Vagina (tissue), 2 donors: ENCODE measurements at regions of chr11 and their contacts with region 1.

Region 1: GRCh38 chr11:33598426-33599069 is 102.1 kb downstream of the C11orf91 start:
- DNase-seq: no peak
- H3K4me3 ChIP-seq: no peak overlapping the region
- H3K27ac ChIP-seq: no peak overlapping the region
- H3K4me1 ChIP-seq: no peaks in the 10 kb centered on the region
- H3K27me3 ChIP-seq: no peaks in the 10 kb centered on the region
- CTCF ChIP-seq: no peak
- POLR2A ChIP-seq: no peak

Region 2: DNA sequence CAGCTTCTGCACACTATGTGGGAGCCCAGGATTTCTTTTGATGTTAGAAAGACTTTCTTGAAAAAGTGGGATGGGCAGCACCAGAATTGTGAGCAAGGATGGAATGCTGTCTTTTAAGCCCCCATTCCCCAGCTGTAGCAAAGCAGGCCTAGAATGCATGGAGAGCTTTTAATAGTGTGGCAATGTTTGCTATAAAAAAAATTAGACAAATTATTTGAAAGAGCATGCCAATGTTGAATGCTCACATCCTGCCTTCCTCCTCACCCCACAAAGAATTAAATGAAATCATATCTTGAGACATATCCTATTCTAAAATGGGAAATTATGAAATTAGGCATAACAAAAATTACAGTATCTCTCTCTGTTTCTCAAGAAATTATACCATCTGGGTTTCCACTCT is 52.6 kb before region 1 on chr11:
- intact Hi-C with region 1: loop called (anchors 2 kb)
- DNase-seq: no peak
- H3K4me3 ChIP-seq: no peak overlapping the region
- H3K27ac ChIP-seq: no peak overlapping the region
- H3K4me1 ChIP-seq: no peaks in the 10 kb centered on the region
- H3K27me3 ChIP-seq: no peaks in the 10 kb centered on the region
- CTCF ChIP-seq: no peak
- POLR2A ChIP-seq: no peak